ENCODE measurements at regions of chr1 and their contacts with region 1.

Region 1: GRCh38 chr1:212477014-212477679 is 44.4 kb downstream of the NENF start:
- DNase-seq: peak; percentile 81 to 90
- ATAC-seq: peak; percentile 93 to 95
- H3K4me3 ChIP-seq: no peak overlapping the region
- H3K27ac ChIP-seq: peak overlapping the region; percentile 33 to 72; a peak in 5 of 6 replicates
- H3K4me1 ChIP-seq: peaks cover 21% of the 10 kb centered on the region
- CTCF ChIP-seq: peak; percentile 87
- EP300 ChIP-seq: no peak
- POLR2A ChIP-seq: no peak
- RAD21 ChIP-seq: peak; percentile 95

Region 2: DNA sequence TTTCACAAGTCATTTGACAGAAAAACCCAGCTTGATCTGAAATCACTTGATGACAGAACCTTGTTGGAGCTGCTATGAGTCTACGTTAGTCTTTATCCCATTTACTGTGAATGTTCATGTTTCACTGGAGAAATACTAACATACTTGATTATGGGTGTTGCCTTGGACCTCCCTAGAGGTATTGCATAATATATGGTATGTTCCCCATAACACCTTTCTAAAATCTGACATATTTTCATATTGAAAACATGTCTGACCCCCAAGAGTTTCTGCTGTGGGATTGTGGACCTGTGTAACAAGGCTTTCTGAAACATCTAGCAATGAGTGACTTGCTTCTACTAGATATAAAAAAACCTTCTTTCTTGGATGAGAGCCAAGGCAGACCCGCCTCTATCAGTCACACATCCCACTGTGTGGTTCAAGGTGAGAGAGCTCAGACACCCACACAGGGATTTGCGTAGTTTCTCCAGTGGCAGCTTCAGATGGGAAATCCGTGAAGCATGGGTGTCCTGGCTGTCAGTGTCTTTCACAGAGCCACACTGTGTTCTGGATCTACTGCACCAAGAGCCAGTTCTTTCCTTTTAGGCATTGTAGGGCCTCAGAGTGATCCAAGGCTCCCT is 39.9 kb before region 1 on chr1:
- CTCF ChIA-PET with region 1: no interaction called
- POLR2A ChIA-PET with region 1: no interaction called
- DNase-seq: no peak
- ATAC-seq: no peak
- H3K4me3 ChIP-seq: no peak overlapping the region
- H3K27ac ChIP-seq: no peak overlapping the region
- H3K4me1 ChIP-seq: peaks cover 19% of the 10 kb centered on the region; the same call in 2 of the 3 replicates
- CTCF ChIP-seq: no peak
- EP300 ChIP-seq: no peak
- POLR2A ChIP-seq: no peak
- RAD21 ChIP-seq: no peak

Region 3: DNA sequence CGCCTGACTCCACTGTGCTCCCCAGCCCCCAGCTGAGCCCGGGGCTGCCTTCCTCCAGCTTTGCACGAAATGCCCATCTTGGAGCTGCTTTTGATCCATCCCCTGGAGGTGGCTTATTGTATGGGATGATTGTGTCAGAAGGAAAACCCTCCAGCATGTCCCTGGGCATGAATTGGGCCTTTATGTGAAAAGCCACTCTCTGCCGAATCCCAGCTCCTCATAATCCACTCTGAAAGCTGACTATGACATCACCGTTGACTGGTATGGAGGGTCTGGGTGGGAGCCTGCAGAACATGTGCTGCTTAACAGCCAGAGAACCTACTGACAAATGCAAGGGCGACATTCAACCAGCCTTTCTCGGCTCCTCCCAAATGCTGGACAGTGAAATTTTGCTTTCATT is 30.2 kb after region 1 on chr1:
- CTCF ChIA-PET with region 1: interaction called, 30 read pairs
- POLR2A ChIA-PET with region 1: no interaction called
- DNase-seq: no peak
- ATAC-seq: no peak
- H3K4me3 ChIP-seq: no peak overlapping the region
- H3K27ac ChIP-seq: no peak overlapping the region
- H3K4me1 ChIP-seq: peaks cover 3% of the 10 kb centered on the region
- CTCF ChIP-seq: no peak
- EP300 ChIP-seq: no peak
- POLR2A ChIP-seq: no peak
- RAD21 ChIP-seq: no peak

Region 4: GRCh38 chr1:212545941-212546635 is 68.9 kb after region 1 on chr1:
- CTCF ChIA-PET with region 1: interaction called, 14 read pairs
- POLR2A ChIA-PET with region 1: no interaction called
- DNase-seq: no peak
- ATAC-seq: no peak; a peak in 1 of 6 replicates
- H3K4me3 ChIP-seq: no peak overlapping the region
- H3K27ac ChIP-seq: no peak overlapping the region
- H3K4me1 ChIP-seq: peaks cover 5% of the 10 kb centered on the region; the same call in 1 of the 3 replicates
- CTCF ChIP-seq: no peak
- EP300 ChIP-seq: no peak
- POLR2A ChIP-seq: no peak
- RAD21 ChIP-seq: no peak

Region 5: GRCh38 chr1:212586206-212587015 is 109.3 kb after region 1 on chr1:
- CTCF ChIA-PET with region 1: interaction called, 19 read pairs
- POLR2A ChIA-PET with region 1: no interaction called
- DNase-seq: no peak
- ATAC-seq: no peak
- H3K4me3 ChIP-seq: no peak overlapping the region
- H3K27ac ChIP-seq: no peak overlapping the region
- H3K4me1 ChIP-seq: no peaks in the 10 kb centered on the region
- CTCF ChIP-seq: no peak
- EP300 ChIP-seq: no peak
- POLR2A ChIP-seq: no peak
- RAD21 ChIP-seq: no peak

Region 6: DNA sequence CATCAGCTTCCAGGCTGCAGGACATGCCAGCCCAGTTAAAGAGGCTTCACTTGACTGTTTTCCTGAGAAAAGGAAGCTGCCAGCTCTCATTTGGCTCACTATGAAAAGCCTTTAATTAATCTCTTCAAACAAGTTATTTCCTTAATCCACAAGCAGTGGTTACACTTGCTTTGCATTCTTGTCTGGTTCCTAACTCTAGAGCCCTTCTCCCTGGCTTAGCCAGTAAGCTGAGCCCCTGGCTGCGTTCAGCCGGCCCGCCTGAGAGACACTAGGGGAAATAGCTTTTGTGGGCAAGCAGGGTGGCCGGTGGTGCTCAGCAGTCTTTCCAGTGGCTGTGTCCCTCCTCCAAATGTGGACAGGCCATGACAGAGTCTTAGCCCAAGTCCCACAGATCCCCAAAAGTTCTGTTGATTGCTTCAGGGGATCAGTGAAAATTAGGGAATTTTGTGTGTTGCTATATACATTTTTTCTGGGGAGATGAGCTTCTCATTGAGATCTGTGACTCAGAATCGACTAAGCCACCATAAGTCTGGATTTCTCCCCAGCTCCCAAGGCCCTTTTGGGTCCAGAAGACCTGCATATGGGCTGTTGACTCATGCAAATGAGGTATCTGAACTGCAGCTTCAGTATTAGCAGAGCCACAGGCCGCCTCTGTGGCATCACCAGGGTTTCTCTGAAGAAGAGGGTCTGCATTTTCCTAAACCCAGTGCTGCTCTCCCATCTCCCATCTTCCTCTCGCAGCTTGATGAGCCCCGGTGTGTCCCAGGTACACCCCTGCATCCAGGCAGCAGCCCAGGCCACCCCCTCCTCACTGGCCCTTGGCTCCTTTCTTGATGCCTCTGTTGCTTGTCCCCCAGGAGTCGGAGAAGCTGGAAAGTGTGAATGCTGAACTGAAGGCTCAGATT is 141.6 kb after region 1 on chr1:
- CTCF ChIA-PET with region 1: interaction called, 47 read pairs
- POLR2A ChIA-PET with region 1: interaction called, 3 read pairs
- DNase-seq: no peak
- ATAC-seq: no peak
- H3K4me3 ChIP-seq: no peak overlapping the region
- H3K27ac ChIP-seq: no peak overlapping the region
- H3K4me1 ChIP-seq: no peaks in the 10 kb centered on the region
- CTCF ChIP-seq: no peak
- EP300 ChIP-seq: no peak
- POLR2A ChIP-seq: no peak
- RAD21 ChIP-seq: no peak

Measured in A549 (cell line).